ENCODE measurements at regions of chr1 and their contacts with region 1.

Region 1: DNA sequence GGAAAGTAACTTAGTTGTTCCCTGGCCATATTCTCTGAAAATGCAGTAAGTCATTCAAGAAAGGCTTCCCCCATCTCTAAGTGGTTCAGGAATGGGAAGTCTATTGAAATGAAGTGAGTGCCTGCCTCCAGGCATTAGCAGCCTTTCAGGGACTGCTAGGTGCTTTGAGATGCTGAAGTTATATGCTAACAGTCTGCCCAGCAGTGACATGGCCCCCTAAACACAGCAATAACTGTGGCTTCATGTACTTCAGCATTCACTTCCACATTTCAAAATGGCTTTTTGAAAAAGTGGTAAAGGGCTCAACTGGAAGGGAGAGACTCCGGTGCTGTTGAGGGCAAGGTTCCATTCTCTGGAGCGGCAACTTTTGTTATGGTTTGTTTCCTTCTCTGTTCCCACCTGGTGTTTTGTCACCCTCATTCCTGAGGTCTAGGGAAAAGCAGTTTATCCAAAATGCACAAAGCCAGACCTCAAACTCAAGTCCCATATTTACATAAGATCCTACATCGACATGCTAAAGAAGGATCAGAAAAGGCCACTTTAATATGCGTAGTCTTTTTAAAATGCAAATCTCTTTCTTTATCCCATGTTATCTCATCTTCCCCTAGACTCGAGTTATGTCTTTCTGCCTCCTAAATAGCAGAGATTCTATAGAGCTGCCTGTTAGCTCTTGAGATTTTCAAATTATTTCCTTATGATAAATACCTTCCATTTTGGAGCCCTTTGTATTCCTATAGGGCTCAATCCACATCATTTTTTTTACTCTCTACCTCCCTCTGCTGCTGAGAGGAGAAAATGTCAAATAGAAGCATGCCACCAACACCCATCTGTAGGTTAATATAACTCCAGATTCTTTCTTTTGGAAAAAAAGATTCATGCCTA is 34.2 kb upstream of the LRRC8C start:
- DNase-seq: peak; percentile 30
- CTCF ChIP-seq: peak; percentile 61

Region 2: GRCh38 chr1:89198491-89199072 is 400.1 kb before region 1 on chr1 and contains the start of gene GBP4:
- CTCF ChIA-PET with region 1: no interaction called
- POLR2A ChIA-PET with region 1: no interaction called
- DNase-seq: peak; percentile 48
- CTCF ChIP-seq: no peak

Region 3: GRCh38 chr1:89433421-89433820 is 165.3 kb before region 1 on chr1:
- CTCF ChIA-PET with region 1: no interaction called
- POLR2A ChIA-PET with region 1: no interaction called
- DNase-seq: no peak
- CTCF ChIP-seq: no peak

Region 4: DNA sequence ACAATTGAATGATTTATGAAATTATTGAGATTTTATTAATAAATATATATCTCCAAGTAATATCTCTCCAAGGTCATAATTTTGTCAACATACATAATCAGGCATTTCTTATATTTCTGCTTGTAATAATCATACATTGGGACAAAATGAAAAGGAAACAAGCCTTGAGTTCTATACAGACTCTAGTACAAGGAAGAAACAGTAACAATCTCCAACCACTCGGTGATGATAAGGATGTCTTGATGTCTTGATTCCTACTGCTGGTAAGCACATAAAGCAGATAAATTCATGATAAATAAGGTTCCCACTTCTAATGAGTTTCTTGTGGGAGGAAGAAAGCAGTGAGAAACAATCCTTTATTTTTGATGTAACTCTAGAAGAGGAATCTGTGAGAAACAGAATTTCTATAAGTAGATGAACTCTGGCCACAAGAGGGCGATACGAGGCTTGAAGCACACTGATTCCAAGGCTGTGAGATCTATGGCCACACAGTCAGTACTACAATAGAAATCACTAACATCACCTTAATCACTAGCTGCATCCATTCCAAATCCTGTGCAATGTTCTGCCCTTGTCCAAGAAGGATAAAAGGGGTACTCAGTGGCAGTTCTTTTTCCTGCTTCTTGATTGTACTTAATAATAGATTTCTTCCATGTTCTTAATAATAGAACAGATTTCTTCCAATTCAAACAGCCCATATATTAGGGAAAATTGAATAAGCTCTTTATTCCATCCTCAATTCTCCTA is 115.5 kb before region 1 on chr1:
- CTCF ChIA-PET with region 1: interaction called, 16 read pairs
- POLR2A ChIA-PET with region 1: no interaction called
- DNase-seq: peak; percentile 56
- CTCF ChIP-seq: peak; percentile 70

Region 5: DNA sequence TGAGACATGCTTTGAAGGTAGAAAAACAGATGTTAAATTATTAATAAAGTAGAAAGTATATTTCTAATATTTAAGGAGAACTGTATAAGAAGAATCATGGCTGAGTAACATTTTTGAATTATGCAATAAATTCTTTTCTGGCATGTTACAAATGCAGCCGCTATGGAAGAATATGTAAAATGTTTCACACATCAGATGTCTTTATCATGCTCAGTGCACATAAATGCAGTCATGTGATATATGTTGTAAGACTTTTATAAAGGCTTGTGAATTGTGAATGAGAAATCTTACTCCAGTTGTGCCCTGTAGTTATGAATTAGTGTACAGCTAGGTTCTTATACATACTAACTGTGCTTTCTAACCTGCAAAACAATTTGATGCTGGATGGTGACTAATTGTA is 20.5 kb before region 1 on chr1:
- CTCF ChIA-PET with region 1: interaction called, 20 read pairs
- POLR2A ChIA-PET with region 1: no interaction called
- DNase-seq: no peak
- CTCF ChIP-seq: no peak

Region 6: DNA sequence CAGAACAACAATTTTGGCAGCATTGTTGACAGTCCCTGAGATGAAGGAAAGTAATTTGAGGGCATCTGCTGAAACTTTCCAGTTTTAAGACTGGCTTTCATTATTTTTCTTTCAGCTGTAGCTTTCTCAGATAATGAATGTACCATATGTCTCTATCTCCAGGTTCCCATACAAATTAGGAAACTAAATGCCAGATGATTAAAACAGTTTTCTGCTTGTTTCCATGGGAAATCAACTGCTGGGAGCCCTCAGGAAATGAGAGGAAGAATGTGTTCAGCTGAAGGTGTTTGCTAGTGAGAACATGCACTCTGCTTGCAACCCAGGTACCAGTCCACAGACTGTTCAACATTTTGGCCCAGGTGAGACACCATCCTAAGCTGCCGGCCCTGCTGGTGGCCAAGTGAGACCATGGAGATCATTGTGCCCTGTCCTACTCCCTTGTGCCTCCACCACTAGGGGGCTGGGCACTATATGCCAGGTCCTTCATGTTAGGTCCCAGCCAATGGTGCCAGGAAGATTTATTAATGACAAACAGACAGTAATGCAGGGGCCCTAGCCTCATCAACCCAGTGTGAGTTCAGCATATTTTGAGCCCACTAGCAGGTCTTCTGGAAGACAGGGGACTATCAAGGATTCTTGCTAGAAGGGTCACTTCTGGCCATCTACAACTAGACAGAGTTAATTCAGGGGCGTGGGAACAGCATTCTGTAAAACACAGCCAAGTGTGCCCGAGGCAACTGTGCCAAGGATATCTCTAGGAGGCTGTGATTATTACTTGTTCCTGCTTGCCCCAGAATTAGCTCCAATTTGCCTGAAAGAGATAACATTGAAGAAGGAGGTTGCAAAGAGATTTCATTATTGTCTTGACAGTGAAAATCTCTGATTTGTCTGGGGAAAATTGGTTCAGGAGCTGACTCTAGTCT is 17.2 kb after region 1 on chr1:
- CTCF ChIA-PET with region 1: interaction called, 52 read pairs
- POLR2A ChIA-PET with region 1: no interaction called
- DNase-seq: no peak
- CTCF ChIP-seq: peak; percentile 15

Region 7: GRCh38 chr1:89657886-89658285 is 59.2 kb after region 1 on chr1:
- CTCF ChIA-PET with region 1: no interaction called
- POLR2A ChIA-PET with region 1: no interaction called
- DNase-seq: peak; percentile 10
- CTCF ChIP-seq: no peak

Region 8: DNA sequence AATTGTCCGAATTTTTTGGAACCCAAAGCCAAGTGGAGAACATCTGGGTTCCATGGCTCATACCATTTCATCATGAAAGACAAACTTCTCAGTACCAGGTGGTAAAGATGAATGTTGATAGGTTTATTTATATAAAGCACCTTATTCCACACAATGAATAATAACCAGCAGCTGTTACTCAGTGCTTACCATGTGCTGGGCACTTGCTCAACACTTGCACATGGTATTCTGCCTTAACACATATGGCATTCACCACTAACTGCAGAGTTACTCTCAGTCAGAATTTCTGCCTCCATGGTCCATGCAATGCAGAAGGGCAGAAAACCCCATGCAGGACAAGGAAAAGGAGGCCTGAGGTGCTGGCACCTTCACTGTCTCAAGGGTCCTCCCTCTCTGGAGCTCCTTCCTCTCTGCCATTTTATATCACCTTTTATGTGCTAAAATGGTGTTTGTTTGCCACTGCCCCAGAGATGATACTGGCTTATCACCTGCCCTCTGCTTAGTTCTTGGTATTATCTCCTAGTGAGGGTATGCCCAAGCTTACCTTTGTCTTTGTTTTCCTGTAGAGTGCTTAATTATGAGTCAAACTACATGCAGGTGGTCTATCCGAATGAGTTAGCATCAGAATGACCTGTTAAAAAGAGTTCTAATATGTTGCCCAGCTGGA is 319.6 kb after region 1 on chr1:
- CTCF ChIA-PET with region 1: no interaction called
- POLR2A ChIA-PET with region 1: no interaction called
- DNase-seq: no peak
- CTCF ChIP-seq: no peak